GM10248 (cell line): ENCODE measurements at regions of chr19 and their contacts with region 1.

Region 1: DNA sequence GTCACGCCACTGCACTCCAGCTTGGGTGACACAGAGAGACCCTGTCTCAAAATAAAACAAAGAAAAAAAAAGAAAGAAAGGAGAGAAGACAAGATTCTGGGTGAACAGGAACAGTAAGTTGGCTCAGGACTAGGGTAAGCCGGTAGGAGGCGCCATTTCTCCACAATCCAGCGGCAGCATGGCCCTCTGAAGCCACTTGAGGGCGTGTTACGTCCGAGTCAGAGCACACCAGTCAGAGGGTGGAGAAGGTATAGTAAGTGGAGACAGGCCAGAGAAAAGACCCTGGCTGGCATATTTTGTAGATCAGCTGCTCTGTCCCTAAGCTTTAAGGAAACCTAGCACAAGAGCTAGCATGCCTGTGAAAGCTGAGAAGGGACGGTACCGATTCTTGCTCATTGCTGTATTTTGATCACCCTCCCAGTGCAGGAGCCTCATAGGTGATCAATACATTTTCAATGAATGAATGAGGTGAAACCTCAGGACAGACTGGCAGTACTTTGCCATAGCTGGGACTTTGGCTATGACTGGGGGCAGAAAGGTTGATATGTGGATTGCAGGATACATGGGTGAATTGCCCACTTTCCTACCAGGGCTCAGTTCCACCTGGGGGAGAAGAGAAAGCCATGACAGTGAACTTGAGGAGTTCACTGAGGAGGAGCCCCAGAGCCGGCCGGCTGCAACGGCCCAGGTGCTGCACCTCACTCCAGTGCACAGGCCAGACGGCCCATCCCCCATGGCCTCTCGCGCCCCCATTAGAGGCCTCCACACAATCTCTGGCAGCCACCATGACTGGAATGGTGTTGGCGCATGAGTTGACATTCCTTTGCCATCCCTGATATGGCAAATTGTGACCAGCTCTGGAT is 23.5 kb downstream of the POU2F2 start:
- DNase-seq: peak; percentile 88
- CTCF ChIP-seq: peak; percentile 100

Region 2: GRCh38 chr19:42121656-42122069 is 12.9 kb after region 1 on chr19:
- CTCF ChIA-PET with region 1: interaction called, 66 read pairs
- POLR2A ChIA-PET with region 1: interaction called, 4 read pairs
- DNase-seq: peak; percentile 82
- CTCF ChIP-seq: no peak

Region 3: DNA sequence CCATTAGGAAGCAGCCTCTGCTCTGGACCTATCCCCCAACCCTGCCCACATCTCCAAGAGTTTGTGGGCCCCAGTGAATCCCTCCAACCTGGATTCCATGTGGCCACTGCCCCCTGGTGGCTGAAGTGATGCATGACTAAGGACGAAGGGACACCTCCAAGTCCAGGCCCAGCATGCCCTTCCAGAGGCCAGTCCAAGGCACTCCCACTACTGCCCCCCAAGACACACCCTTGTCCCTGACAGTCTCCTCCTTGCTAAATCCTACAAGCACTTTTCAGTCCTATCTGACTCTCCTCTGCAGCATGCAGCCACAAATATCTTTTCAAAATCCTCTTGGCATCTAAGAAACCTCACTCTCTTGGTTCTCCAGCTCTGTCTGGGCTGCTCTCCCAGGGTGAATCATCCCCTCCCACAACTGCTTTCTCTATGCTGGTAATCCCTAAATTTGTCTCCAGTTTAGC is 75.7 kb after region 1 on chr19:
- CTCF ChIA-PET with region 1: interaction called, 80 read pairs
- POLR2A ChIA-PET with region 1: no interaction called
- DNase-seq: peak; percentile 80
- CTCF ChIP-seq: peak; percentile 92

Region 4: DNA sequence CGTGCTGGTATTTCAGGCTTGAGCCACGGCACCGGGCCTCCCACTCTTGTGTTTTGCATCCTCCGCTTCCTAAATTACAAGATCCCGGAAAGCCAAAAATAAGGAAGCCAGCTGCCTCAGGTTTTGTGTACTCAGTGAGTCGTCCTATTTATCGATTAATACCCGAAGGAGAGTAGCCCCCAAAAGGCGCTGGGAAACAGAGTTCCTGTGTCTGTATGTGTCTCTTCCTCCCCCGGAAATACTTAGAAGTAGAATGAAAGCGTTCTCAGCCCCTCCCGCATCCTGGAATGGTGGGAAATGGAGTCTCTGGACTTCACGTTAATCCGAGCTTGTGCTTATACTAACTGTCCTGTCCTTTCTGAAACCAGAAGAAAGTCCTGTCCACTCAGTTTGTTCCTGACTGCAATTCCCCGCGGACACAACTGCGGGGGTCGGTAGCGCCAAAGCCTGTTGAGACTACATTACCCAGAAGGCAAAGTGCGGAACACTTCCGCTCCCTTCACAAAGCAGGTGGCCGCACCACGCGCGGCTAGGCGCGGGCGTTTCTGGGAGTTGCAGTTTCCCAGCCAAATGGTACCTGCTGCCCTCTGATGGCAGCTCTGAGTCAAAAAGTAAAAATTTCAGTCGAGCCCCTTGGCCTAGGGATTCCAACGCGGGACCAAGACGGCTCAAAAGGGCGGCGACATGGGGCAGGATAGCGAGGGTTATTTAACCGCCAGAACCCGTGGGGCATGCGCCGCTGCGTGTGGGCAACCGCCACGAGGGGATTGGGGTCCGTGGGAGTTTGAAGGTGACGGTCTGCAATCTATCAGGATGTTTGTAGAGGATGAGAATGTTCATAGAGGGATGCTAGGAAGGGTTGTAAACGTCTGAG is 135.8 kb after region 1 on chr19:
- CTCF ChIA-PET with region 1: interaction called, 10 read pairs
- POLR2A ChIA-PET with region 1: interaction called, 3 read pairs
- DNase-seq: peak; percentile 86
- CTCF ChIP-seq: peak; percentile 69

Region 5: GRCh38 chr19:42295831-42296525 is 187.2 kb after region 1 on chr19:
- CTCF ChIA-PET with region 1: interaction called, 11 read pairs
- POLR2A ChIA-PET with region 1: no interaction called
- DNase-seq: peak; percentile 84
- CTCF ChIP-seq: peak; percentile 99

Region 6: DNA sequence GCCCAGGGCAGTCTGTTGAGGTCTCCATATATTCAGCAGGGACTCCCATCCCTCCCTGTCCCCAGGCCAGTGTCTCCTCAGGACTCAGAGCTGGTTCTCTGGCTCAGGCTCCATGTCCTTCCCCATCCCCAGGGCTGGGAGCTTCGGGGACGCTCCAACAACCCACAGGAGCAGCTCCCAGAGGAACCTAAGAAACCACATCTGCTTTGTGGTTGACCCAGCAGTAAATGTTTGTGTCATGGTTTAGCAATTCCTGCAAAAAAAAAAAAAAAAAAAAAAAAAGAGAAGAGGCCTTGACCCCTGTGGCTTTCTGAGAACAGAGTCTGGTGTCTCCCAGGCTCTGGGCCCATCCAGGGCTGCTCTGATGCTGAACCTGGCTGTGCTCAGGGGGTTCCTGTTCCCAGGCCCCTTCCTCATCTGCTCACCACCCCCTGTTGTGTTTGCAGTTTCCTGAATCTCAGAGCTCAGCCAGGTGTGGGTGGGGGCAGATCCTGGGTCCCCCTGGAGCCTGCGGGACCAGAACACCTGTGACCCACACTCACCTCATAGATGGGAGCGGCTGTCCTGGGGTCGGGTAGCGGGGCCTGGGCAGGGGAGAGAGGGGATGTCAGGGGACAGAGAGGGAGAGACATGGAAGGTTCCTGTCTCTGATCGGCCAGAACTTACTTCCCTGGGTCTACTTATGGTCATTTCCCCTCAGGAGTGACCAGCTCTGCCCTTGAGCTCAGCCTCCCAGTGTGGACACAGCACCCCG is 444.7 kb after region 1 on chr19:
- CTCF ChIA-PET with region 1: no interaction called
- POLR2A ChIA-PET with region 1: no interaction called
- DNase-seq: no peak
- CTCF ChIP-seq: no peak